Activated CD4-positive, alpha-beta T cell treated with anti-CD3 and anti-CD28 coated beads for 36 hours (primary cell): ENCODE measurements at regions of chr1 and their contacts with region 1.

Region 1: GRCh38 chr1:116514708-116515525 is 55.9 kb downstream of the CD58 start:
- DNase-seq: peak; percentile 78
- ATAC-seq: peak; percentile 94
- H3K4me3 Mint-ChIP-seq: peak overlapping the region; percentile 39
- H3K27ac Mint-ChIP-seq: peak overlapping the region; percentile 85
- H3K4me1 Mint-ChIP-seq: peaks cover 56% of the 10 kb centered on the region
- H3K27me3 Mint-ChIP-seq: no peaks in the 10 kb centered on the region

Region 2: GRCh38 chr1:115642168-115643072 is 872.5 kb before region 1 on chr1:
- CTCF ChIA-PET with region 1: no interaction called
- POLR2A ChIA-PET with region 1: no interaction called
- intact Hi-C with region 1: loop called in 1 of 2 experiments (anchors 10 kb)
- DNase-seq: peak; percentile 56
- ATAC-seq: peak; percentile 45
- H3K4me3 Mint-ChIP-seq: peak overlapping the region; percentile 75
- H3K27ac Mint-ChIP-seq: no peak overlapping the region
- H3K4me1 Mint-ChIP-seq: peaks cover 11% of the 10 kb centered on the region
- H3K27me3 Mint-ChIP-seq: peaks cover 29% of the 10 kb centered on the region

Region 3: GRCh38 chr1:116504308-116505156 is 10.4 kb before region 1 on chr1:
- CTCF ChIA-PET with region 1: interaction called, 8 read pairs
- POLR2A ChIA-PET with region 1: interaction called, 14 read pairs
- intact Hi-C with region 1: loop called in 1 of 2 experiments (anchors 1 kb)
- DNase-seq: peak; percentile 89
- ATAC-seq: peak; percentile 86
- H3K4me3 Mint-ChIP-seq: peak overlapping the region; percentile 31
- H3K27ac Mint-ChIP-seq: peak overlapping the region; percentile 94
- H3K4me1 Mint-ChIP-seq: peaks cover 60% of the 10 kb centered on the region
- H3K27me3 Mint-ChIP-seq: no peaks in the 10 kb centered on the region

Region 4: DNA sequence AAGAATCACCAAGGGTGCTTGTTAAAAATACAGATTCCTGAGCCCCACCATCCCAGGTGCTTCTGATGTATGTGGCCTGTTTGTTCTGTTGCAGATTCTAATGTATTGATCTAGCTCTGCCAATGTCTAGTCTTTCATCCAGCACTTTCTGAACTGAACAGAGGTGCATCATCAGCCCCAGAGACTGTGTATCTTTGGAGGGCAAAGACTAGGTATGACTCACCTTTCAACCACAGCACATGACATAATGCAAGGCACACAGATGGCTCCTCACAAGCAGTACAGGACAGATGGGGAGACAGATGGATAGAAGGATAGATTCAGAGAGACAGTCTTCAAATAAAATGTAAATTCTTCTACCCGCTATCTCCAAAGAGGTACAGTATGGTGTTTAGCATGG is 23.6 kb after region 1 on chr1:
- CTCF ChIA-PET with region 1: interaction called, 6 read pairs
- POLR2A ChIA-PET with region 1: interaction called, 3 read pairs
- intact Hi-C with region 1: loop called (anchors 1 to 2 kb)
- DNase-seq: peak; percentile 66
- ATAC-seq: peak; percentile 97
- H3K4me3 Mint-ChIP-seq: no peak overlapping the region
- H3K27ac Mint-ChIP-seq: peak overlapping the region; percentile 34
- H3K4me1 Mint-ChIP-seq: peaks cover 38% of the 10 kb centered on the region
- H3K27me3 Mint-ChIP-seq: no peaks in the 10 kb centered on the region

Region 5: GRCh38 chr1:116570358-116571200 is 55.7 kb after region 1 on chr1 and contains the start of gene CD58:
- CTCF ChIA-PET with region 1: no interaction called
- POLR2A ChIA-PET with region 1: no interaction called
- intact Hi-C with region 1: loop called in 1 of 2 experiments (anchors 1 kb)
- DNase-seq: peak; percentile 93
- ATAC-seq: peak; percentile 77
- H3K4me3 Mint-ChIP-seq: peak within 1 kb of the TSS; percentile 91
- H3K27ac Mint-ChIP-seq: peak within 1 kb of the TSS; percentile 87
- H3K4me1 Mint-ChIP-seq: peaks cover 64% of the 10 kb centered on the region
- H3K27me3 Mint-ChIP-seq: peaks cover 8% of the 10 kb centered on the region
- total RNA-seq, gene CD58: 12.4 to 16.0 TPM

Region 6: GRCh38 chr1:116667575-116668105 is 152.7 kb after region 1 on chr1 and contains the start of gene IGSF3:
- CTCF ChIA-PET with region 1: interaction called, 3 read pairs
- POLR2A ChIA-PET with region 1: no interaction called
- intact Hi-C with region 1: loop called in 1 of 2 experiments (anchors 5 kb)
- DNase-seq: peak; percentile 76
- ATAC-seq: peak; percentile 92
- H3K4me3 Mint-ChIP-seq: peak within 1 kb of the TSS; percentile 69
- H3K27ac Mint-ChIP-seq: no peak within 1 kb of the TSS
- H3K4me1 Mint-ChIP-seq: peaks cover 10% of the 10 kb centered on the region
- H3K27me3 Mint-ChIP-seq: peaks cover 39% of the 10 kb centered on the region
- total RNA-seq, gene IGSF3: 3.8 to 4.1 TPM

Region 7: GRCh38 chr1:116679091-116679827 is 164.3 kb after region 1 on chr1:
- CTCF ChIA-PET with region 1: no interaction called
- POLR2A ChIA-PET with region 1: no interaction called
- intact Hi-C with region 1: no loop called
- DNase-seq: no peak
- ATAC-seq: no peak
- H3K4me3 Mint-ChIP-seq: no peak overlapping the region
- H3K27ac Mint-ChIP-seq: no peak overlapping the region
- H3K4me1 Mint-ChIP-seq: no peaks in the 10 kb centered on the region
- H3K27me3 Mint-ChIP-seq: peaks cover 12% of the 10 kb centered on the region